T-cell (primary cell): ENCODE measurements at regions of chr10 and their contacts with region 1.

Region 1: DNA sequence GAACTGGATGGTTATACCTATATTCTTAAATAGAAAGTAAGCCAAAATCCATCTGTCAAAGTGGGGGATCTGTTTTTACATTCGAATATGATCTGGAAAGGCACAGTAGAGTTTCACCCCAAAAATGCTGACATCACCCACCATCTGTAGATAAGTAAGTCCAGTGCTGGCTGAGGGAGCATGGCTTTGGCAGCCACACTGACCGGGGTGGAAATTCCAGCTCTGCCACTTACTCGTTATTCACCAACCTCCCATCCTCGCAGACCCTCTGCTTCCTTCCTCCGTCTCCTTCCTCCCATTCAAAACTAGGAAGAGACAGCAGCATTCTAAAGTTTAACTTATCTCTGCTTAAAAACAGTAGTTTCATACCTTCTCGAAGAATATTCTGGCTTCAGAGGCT is 84.9 kb upstream of the GATA3 start:
- DNase-seq: no peak
- ATAC-seq: no peak
- H3K4me3 ChIP-seq: no peak overlapping the region
- H3K4me3 Mint-ChIP-seq: no peak overlapping the region
- H3K27ac ChIP-seq: no peak overlapping the region
- H3K27ac Mint-ChIP-seq: no peak overlapping the region
- H3K4me1 ChIP-seq: no peaks in the 10 kb centered on the region
- H3K4me1 Mint-ChIP-seq: peaks cover 2 to 12% (median 10%) of the 10 kb centered on the region in 3 donors
- H3K27me3 ChIP-seq: no peaks in the 10 kb centered on the region
- H3K27me3 Mint-ChIP-seq: no peaks in the 10 kb centered on the region

Region 2: GRCh38 chr10:7959068-7959467 is 10.6 kb before region 1 on chr10:
- CTCF ChIA-PET with region 1: interaction called in 1 of 2 experiments, 16 read pairs
- POLR2A ChIA-PET with region 1: no interaction called
- DNase-seq: no peak
- ATAC-seq: no peak
- H3K4me3 ChIP-seq: no peak overlapping the region
- H3K4me3 Mint-ChIP-seq: no peak overlapping the region
- H3K27ac ChIP-seq: no peak overlapping the region
- H3K27ac Mint-ChIP-seq: no peak overlapping the region
- H3K4me1 ChIP-seq: no peaks in the 10 kb centered on the region
- H3K4me1 Mint-ChIP-seq: peaks cover 12 to 15% (median 12%) of the 10 kb centered on the region in 3 donors
- H3K27me3 ChIP-seq: no peaks in the 10 kb centered on the region
- H3K27me3 Mint-ChIP-seq: no peaks in the 10 kb centered on the region